Tibial artery (tissue), 4 donors: ENCODE measurements at regions of chr17 and their contacts with region 1.

Region 1: GRCh38 chr17:6084311-6085161 is 14.4 kb downstream of the WSCD1 start:
- DNase-seq: no peak
- H3K4me3 ChIP-seq: no peak overlapping the region
- H3K27ac ChIP-seq: no peak overlapping the region
- H3K4me1 ChIP-seq: no peaks in the 10 kb centered on the region
- H3K27me3 ChIP-seq: no peaks in the 10 kb centered on the region
- CTCF ChIP-seq: no peak

Region 2: DNA sequence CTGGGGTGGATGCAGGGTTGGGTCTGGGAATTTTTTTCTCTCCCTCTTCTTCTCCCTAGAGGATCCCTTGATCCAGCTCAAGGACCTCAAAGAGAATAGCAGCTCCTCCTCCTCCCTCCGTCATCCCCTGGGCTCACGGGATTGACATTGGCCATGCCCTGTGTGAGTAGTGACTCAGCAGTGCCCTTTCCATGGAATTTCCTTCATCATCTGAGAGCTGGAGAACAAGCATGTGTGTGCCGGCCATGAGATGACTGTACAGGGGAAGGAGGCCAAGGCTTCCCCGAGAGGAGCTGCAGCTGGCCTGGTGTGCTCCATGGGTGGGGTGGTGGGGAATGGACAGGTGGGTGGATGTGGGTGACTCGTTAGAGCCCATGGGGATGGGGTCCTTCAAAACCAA is 23.2 kb before region 1 on chr17:
- intact Hi-C with region 1: no loop called
- DNase-seq: peak; percentile 38 to 90
- H3K4me3 ChIP-seq: no peak overlapping the region
- H3K27ac ChIP-seq: peak overlapping the region in 1 of 2 donors; percentile 36
- H3K4me1 ChIP-seq: peaks cover 0 to 15% (median 8%) of the 10 kb centered on the region in 4 donors
- H3K27me3 ChIP-seq: peaks cover 0 to 18% of the 10 kb centered on the region in 2 donors
- CTCF ChIP-seq: no peak

Region 3: DNA sequence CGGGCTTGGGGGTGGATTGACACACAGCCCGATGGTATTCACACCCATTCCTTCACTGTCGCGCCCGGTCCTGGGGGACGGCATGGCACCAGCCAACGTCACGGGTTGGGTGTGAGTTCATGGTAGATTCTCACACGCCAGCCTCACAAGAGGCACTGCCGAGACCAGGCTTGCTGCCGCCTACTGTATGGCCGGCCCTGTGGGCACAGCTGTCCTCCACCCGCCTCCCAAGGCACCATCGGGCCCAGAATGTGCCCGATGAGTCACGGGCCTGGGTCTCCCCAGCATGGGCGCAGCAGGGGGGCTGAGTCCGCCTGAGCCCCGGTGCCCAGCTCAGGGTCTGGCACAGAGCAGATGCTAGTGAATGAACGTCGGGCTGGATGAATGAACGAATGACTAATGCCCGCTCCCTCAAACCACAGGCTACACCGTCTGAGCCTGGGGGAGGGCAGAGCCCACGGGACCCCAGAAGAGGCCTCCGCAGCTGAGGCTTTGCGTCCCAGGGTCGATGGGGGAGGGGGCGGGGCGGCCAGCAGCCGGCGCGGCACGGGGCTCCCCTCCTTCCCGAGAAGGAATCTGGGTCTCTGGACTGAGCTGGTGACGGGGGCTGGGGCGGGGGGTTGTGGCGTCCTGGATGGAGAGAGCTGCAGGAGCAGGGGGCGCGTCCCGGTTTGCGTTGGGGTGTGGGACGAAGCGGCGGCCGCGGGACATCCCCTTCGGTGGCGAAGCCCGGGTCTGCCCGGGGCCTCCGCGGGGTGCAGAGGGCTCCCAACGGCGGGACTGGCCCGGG is 471.0 kb after region 1 on chr17:
- intact Hi-C with region 1: loop called (anchors 10 kb)
- DNase-seq: no peak
- H3K4me3 ChIP-seq: peak overlapping the region; percentile 52 to 56
- H3K27ac ChIP-seq: no peak overlapping the region
- H3K4me1 ChIP-seq: peaks cover 0 to 28% (median 20%) of the 10 kb centered on the region in 4 donors
- H3K27me3 ChIP-seq: peaks cover 0 to 23% of the 10 kb centered on the region in 2 donors
- CTCF ChIP-seq: no peak

Region 4: GRCh38 chr17:7931709-7932482 is 1847.4 kb after region 1 on chr17 and contains the starts of genes CNTROB and TRAPPC1:
- intact Hi-C with region 1: no loop called
- DNase-seq: peak; percentile 100
- H3K4me3 ChIP-seq: peak within 1 kb of the TSS; percentile 74 to 82
- H3K27ac ChIP-seq: peak within 1 kb of the TSS; percentile 63 to 78
- H3K4me1 ChIP-seq: peaks cover 0 to 38% (median 25%) of the 10 kb centered on the region in 4 donors
- H3K27me3 ChIP-seq: peaks cover 0 to 10% of the 10 kb centered on the region in 2 donors
- CTCF ChIP-seq: no peak